ENCODE measurements at regions of chrX and their contacts with region 1.

Region 1: DNA sequence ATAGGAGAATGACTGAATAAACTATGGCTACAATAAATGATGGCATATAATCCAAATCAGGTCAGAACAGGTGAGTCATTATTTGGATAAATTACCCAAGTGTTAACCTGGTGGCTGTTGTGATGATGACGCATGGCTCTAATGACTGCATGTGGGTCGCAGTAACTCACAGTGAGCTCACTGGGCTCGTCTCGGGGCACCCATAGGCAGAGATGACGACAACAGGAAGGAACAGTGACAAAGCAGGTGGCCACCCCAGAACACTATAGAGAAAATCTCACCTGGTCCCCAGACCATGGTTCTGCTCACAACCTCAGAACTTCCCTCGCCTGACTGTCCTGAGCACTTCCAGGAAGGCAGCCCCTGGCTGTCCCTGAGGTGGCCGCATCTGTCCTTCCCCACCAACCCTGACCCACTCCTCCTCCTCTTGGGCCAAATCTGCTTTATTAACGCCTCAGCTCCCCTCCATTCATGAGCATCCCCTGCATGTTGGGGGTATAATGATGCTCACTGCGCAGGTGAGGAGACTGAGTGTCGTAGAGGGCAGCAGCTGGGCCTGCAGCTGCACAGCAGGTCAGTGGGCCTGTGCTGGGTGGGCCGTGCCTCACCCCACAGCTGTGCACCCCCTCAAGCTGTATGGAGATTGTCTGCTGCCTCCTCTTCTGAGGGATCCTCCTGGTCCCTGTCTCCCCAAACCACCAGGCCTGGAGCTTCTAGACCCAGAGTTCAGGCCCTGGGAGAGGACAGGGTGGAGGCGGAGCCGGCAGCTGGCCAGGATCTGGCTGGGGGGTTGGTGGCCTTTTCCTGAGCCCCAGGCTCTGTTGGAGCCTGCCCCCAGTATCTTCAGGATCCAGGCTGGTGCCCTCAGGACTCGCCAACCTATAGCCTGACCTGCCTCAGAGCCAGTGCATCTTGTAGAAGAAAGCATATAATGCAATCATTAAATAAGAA is 30.9 kb upstream of the FAM156A start:
- DNase-seq: peak; percentile 11
- H3K4me3 Mint-ChIP-seq: no peak overlapping the region
- H3K27ac Mint-ChIP-seq: no peak overlapping the region
- H3K4me1 Mint-ChIP-seq: peaks cover 23% of the 10 kb centered on the region
- H3K27me3 Mint-ChIP-seq: no peaks in the 10 kb centered on the region

Region 2: GRCh38 chrX:52574416-52575275 is 414.6 kb before region 1 on chrX:
- CTCF ChIA-PET with region 1: no interaction called
- intact Hi-C with region 1: loop called (anchors 2 kb)
- DNase-seq: peak; percentile 38
- H3K4me3 Mint-ChIP-seq: no peak overlapping the region
- H3K27ac Mint-ChIP-seq: no peak overlapping the region
- H3K4me1 Mint-ChIP-seq: no peaks in the 10 kb centered on the region
- H3K27me3 Mint-ChIP-seq: no peaks in the 10 kb centered on the region

Region 3: DNA sequence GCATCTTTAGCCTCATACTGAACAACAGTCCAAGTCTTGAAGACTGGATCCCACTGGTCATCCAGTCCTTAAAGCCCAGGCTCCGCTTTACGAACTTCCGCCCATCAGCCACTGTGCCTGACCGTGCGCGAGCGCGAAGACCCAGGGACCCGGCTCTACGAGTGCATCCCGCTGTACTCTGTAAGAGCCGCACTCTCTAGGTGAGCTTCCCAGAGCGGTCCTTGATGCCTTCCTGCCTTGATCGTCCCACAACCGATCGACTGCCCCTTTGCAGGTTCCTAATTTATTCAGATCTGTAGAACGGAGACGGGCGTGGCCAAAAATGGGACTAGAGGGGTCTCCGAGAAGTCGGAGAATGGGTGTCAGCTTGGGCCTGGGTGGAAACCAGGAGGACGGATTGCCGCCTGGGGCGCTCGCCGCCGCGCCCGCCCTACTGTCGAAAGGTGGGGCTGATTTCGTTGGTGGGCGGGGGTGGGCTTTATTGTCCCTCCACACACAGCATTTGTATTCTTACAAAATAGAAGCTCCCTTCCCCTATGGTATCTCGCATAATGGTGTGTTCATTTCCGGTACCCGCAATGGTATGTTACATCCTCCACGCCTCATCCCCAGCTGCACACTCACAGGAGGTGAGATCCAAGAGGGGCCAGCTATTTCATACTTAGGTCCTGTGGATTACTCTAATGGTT is 11.3 kb after region 1 on chrX:
- CTCF ChIA-PET with region 1: interaction called, 12 read pairs
- intact Hi-C with region 1: no loop called
- DNase-seq: peak; percentile 24
- H3K4me3 Mint-ChIP-seq: peak overlapping the region; percentile 52
- H3K27ac Mint-ChIP-seq: no peak overlapping the region
- H3K4me1 Mint-ChIP-seq: peaks cover 14% of the 10 kb centered on the region
- H3K27me3 Mint-ChIP-seq: no peaks in the 10 kb centered on the region

Region 4: DNA sequence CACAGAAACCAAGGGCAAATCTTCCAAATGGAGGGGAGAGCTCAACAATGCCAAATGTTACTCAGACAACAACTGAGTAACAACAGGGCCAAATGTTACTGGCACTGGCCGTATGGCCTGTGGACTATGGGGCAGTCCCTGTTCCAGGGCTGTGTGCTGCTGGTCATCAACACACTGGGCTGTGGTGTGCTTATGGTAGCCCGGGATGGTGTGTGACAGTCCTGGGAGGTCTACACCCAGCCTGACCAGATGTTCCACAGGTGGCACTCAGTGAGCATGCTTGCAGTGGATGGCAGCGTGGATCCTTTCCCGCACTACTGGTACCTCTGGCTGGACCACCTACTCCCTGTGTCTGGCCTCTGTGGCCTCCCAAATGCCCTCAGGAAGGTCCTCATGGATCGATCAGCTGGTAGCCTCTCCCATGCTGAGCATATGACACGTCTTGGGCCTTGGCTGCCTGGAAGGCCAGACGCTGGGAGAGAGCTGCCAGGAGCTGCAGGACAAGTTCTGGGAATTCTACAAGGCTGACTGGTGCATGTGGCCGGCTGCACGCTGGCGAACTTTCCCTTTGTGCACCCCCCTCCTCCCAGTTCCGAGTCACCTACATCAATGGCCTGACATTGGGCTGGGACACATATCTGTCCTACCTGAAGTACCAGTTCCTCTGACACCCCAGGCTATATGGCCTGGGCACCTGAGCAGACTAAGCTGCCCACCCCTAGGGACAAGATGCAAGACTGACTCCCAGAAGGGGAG is 351.8 kb after region 1 on chrX:
- CTCF ChIA-PET with region 1: no interaction called
- intact Hi-C with region 1: no loop called
- DNase-seq: no peak
- H3K4me3 Mint-ChIP-seq: no peak overlapping the region
- H3K27ac Mint-ChIP-seq: no peak overlapping the region
- H3K4me1 Mint-ChIP-seq: no peaks in the 10 kb centered on the region
- H3K27me3 Mint-ChIP-seq: no peaks in the 10 kb centered on the region

Measured in activated naive CD4-positive, alpha-beta T cell treated with anti-CD3 and anti-CD28 coated beads for 36 hours (primary cell).